ENCODE measurements at regions of chr3 and their contacts with region 1.

Region 1: DNA sequence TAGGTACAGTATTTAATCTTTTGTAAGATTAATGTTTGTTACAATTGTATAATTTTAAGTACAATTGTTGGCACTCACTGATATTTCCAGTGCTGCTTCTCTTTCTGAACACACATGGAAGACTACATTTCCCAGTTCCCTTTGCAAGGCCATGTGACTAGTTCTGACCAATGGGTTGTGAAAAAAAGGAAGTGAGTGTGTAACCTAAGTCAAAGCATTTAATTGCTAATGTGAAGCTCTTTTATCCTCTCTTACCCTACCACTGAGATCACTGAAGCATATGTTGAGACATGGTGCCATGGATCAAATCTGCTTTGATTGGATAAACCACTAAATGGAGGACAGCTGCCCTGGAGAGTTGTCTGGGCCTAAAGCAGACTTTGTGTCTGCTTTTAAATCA is 83.9 kb upstream of the PLXND1 start:
- DNase-seq: peak in 1 of 2 donors; percentile 59
- ATAC-seq: peak in 7 of 8 donors; percentile 33 to 78 (median 52)
- H3K4me3 ChIP-seq: no peak overlapping the region
- H3K27ac ChIP-seq: no peak overlapping the region
- H3K4me1 ChIP-seq: peaks cover 0 to 43% (median 21%) of the 10 kb centered on the region in 9 donors
- H3K27me3 ChIP-seq: no peaks in the 10 kb centered on the region
- CTCF ChIP-seq: no peak

Region 2: DNA sequence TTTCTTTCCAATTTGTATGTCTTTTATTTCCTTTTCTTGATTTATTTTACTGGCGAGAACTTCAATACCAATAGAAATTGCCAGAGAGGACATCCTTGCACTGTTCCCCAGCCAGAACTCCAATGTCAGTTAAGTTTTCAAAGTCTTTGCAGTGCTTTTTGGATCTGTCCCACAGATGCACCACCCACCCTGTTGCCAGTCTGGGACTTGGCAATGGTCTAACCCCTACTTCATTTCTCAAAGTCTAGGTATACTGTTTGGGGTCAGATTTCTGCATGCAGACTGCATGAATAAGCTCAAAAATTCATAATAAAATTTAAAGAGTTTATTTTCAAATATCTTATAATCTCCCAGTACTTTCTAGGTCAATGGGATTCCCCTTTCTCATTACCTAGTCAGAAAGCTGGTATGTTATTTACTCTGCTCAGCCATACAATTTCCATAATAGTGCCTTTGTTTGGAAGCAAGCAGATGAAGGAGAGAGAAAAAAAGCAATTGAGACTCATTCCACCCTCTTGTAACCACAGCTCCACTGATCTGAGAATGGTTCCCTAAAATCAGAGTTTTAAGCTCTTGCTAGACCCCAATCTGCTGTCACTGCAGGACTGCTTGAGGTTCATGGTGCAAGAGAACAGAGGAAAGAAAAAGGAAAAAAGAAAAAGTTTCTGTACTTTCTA is 41.9 kb after region 1 on chr3:
- intact Hi-C with region 1: loop called in 1 of 10 experiments (anchors 5 kb)
- DNase-seq: no peak
- ATAC-seq: no peak
- H3K4me3 ChIP-seq: no peak overlapping the region
- H3K27ac ChIP-seq: no peak overlapping the region
- H3K4me1 ChIP-seq: peaks cover 0 to 3% (median 0%) of the 10 kb centered on the region in 9 donors
- H3K27me3 ChIP-seq: no peaks in the 10 kb centered on the region
- CTCF ChIP-seq: no peak

Measured in heart right ventricle (tissue), 16 donors.